CD4-positive, alpha-beta T cell (primary cell): ENCODE measurements at regions of chr14 and their contacts with region 1.

Region 1: GRCh38 chr14:67166450-67166853 is 22.8 kb upstream of the GARIN2 start:
- DNase-seq: peak in 8 of 14 experiments; percentile 11 to 62 (median 31)
- ATAC-seq: no peak
- H3K4me3 ChIP-seq: no peak overlapping the region
- H3K4me3 Mint-ChIP-seq: no peak overlapping the region
- H3K27ac ChIP-seq: no peak overlapping the region
- H3K27ac Mint-ChIP-seq: no peak overlapping the region
- H3K4me1 ChIP-seq: no peaks in the 10 kb centered on the region
- H3K4me1 Mint-ChIP-seq: no peaks in the 10 kb centered on the region
- H3K27me3 ChIP-seq: no peaks in the 10 kb centered on the region
- H3K27me3 Mint-ChIP-seq: no peaks in the 10 kb centered on the region
- CTCF ChIP-seq: peak; percentile 72

Region 2: DNA sequence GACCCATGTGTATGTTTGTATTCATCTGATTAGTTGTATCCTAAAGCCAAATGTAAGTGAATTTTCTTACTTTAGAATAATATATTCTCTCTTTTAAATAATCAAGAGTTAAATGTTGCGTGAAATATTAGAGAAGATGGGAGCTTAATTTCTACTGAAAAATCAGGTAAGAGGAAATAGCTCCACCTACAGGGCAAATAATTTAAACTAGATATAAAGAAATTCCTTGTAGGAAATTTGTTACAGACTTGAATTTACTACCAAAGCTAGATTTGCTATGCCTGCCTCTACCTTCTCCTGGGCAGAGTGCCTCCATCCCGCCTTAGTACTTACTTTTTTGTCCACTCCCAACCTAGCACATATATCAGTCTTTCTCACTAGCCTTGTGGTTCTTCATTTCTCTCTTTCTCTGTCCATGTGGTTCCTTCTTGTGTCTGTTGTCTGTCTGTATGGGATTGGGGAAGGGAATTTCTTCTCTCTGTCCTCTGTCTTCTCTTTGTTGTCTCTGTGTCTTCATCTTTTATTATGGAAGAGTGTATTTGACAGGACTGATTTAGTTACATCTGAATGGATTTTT is 119.5 kb after region 1 on chr14:
- CTCF ChIA-PET with region 1: interaction called, 5 read pairs
- POLR2A ChIA-PET with region 1: interaction called, 3 read pairs
- intact Hi-C with region 1: loop called (anchors 1 kb)
- DNase-seq: peak in 3 of 14 experiments; percentile 48 to 55 (median 51)
- ATAC-seq: no peak
- H3K4me3 ChIP-seq: no peak overlapping the region
- H3K4me3 Mint-ChIP-seq: no peak overlapping the region
- H3K27ac ChIP-seq: no peak overlapping the region
- H3K27ac Mint-ChIP-seq: no peak overlapping the region
- H3K4me1 ChIP-seq: no peaks in the 10 kb centered on the region
- H3K4me1 Mint-ChIP-seq: no peaks in the 10 kb centered on the region
- H3K27me3 ChIP-seq: no peaks in the 10 kb centered on the region
- H3K27me3 Mint-ChIP-seq: no peaks in the 10 kb centered on the region
- CTCF ChIP-seq: peak; percentile 81

Region 3: GRCh38 chr14:67335781-67336180 is 169.3 kb after region 1 on chr14:
- CTCF ChIA-PET with region 1: no interaction called
- POLR2A ChIA-PET with region 1: no interaction called
- intact Hi-C with region 1: loop called in 1 of 2 experiments (anchors 5 kb)
- DNase-seq: peak in 4 of 14 experiments; percentile 6 to 40 (median 25)
- ATAC-seq: no peak
- H3K4me3 ChIP-seq: no peak overlapping the region
- H3K4me3 Mint-ChIP-seq: no peak overlapping the region
- H3K27ac ChIP-seq: no peak overlapping the region
- H3K27ac Mint-ChIP-seq: peak overlapping the region; percentile 10
- H3K4me1 ChIP-seq: no peaks in the 10 kb centered on the region
- H3K4me1 Mint-ChIP-seq: no peaks in the 10 kb centered on the region
- H3K27me3 ChIP-seq: no peaks in the 10 kb centered on the region
- H3K27me3 Mint-ChIP-seq: no peaks in the 10 kb centered on the region
- CTCF ChIP-seq: peak; percentile 41

Region 4: DNA sequence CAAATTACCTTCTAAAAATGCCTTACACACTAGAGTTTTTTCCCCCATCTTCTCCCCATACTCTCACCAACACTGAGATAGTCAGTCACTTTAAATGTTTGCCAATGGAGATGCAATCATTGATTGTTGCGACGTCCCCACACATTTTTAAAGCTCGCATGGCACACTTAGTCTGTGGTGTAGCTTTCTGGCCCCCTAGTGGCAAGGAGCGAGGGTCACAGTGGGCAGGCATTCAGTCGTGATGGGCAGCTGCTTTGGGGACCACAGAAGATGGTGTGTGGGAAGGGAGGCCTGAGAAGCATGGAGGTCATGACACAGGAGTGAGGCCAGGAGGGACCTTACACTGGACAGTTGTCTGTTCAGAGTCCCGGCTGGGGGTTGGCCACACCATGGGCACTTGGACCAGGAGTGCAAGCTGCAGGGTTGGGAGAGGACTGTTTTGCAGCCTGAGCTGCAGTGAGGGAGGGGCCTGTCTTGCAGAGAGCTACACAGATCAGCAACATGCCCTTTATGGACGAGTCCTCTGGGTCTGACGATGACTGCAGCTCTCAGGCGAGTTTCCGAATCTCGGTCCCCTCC is 404.9 kb after region 1 on chr14:
- CTCF ChIA-PET with region 1: no interaction called
- POLR2A ChIA-PET with region 1: no interaction called
- intact Hi-C with region 1: loop called in 1 of 2 experiments (anchors 5 kb)
- DNase-seq: peak; percentile 54 to 81 (median 66)
- ATAC-seq: peak; percentile 93
- H3K4me3 ChIP-seq: no peak overlapping the region
- H3K4me3 Mint-ChIP-seq: no peak overlapping the region
- H3K27ac ChIP-seq: no peak overlapping the region
- H3K27ac Mint-ChIP-seq: no peak overlapping the region
- H3K4me1 ChIP-seq: peaks cover 3% of the 10 kb centered on the region
- H3K4me1 Mint-ChIP-seq: no peaks in the 10 kb centered on the region
- H3K27me3 ChIP-seq: no peaks in the 10 kb centered on the region
- H3K27me3 Mint-ChIP-seq: no peaks in the 10 kb centered on the region
- CTCF ChIP-seq: peak; percentile 87